ENCODE measurements at regions of chr7 and their contacts with region 1.

Region 1: DNA sequence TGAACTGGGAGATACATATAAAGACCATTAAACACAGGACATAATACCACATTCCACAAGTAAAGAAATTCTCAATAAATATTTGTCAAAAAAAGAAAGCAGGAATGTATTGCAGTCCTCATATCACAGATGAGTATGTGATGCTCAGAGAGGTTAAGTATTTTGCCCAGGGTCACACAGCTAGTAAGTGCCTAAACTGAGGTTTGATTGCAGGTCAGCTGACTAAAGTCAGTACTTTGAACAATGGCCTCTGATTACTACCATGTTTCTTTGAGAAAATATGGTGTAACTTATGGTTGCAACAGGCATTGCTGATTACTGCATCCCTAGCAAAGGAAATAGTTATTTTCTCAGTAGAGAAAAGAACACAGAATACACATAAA is 267.1 kb downstream of the ELMO1 start:
- DNase-seq: no peak
- ATAC-seq: peak; percentile 22
- H3K4me3 ChIP-seq: no peak overlapping the region
- H3K27ac ChIP-seq: no peak overlapping the region
- H3K4me1 ChIP-seq: no peaks in the 10 kb centered on the region
- H3K27me3 ChIP-seq: peaks cover 2% of the 10 kb centered on the region; the same call in 1 of the 2 replicates
- CTCF ChIP-seq: no peak
- POLR2A ChIP-seq: no peak
- RAD21 ChIP-seq: no peak

Region 2: GRCh38 chr7:36473454-36474282 is 707.9 kb before region 1 on chr7:
- CTCF ChIA-PET with region 1: no interaction called
- POLR2A ChIA-PET with region 1: no interaction called
- dilution Hi-C with region 1: no loop called
- in situ Hi-C with region 1: no loop called
- intact Hi-C with region 1: loop called (anchors 1 kb)
- DNase-seq: no peak
- ATAC-seq: peak; percentile 53
- H3K4me3 ChIP-seq: no peak overlapping the region
- H3K27ac ChIP-seq: no peak overlapping the region
- H3K4me1 ChIP-seq: no peaks in the 10 kb centered on the region
- H3K27me3 ChIP-seq: peaks cover 4% of the 10 kb centered on the region; the same call in 1 of the 2 replicates
- CTCF ChIP-seq: peak; percentile 42
- POLR2A ChIP-seq: no peak
- RAD21 ChIP-seq: peak; percentile 59

Region 3: DNA sequence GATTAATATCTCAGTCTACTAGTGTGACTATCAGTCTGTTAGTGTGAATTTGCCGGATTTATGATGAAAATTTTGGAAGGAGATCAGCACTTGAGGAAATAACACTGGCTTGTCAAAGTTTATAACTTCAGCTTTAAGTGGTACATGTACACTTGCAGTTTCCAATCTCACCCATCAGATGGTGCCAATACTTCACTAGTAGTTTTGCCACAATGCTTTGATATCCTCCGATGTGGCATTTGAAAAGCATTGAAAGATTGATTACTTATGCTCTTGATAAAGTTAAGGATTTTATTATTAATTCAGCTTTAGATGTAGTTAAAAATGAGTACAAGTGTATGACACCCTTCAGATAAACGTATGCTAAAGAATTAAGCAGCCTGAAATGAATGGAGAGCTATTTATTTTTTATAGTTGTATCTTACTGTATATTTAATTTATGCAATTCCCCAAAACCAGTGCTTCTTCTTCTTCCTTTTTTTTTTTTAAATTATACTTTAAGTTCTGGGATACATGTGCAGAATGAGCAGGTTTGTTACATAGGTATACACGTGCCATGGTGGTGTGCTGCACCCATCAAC is 693.7 kb before region 1 on chr7:
- CTCF ChIA-PET with region 1: interaction called, 3 read pairs
- POLR2A ChIA-PET with region 1: no interaction called
- dilution Hi-C with region 1: no loop called
- in situ Hi-C with region 1: no loop called
- intact Hi-C with region 1: loop called (anchors 1 kb)
- DNase-seq: peak; percentile 68
- ATAC-seq: peak; percentile 85
- H3K4me3 ChIP-seq: no peak overlapping the region
- H3K27ac ChIP-seq: no peak overlapping the region
- H3K4me1 ChIP-seq: no peaks in the 10 kb centered on the region
- H3K27me3 ChIP-seq: peaks cover 19% of the 10 kb centered on the region
- CTCF ChIP-seq: peak; percentile 88
- POLR2A ChIP-seq: no peak
- RAD21 ChIP-seq: peak; percentile 94

Region 4: GRCh38 chr7:36670585-36671431 is 510.7 kb before region 1 on chr7:
- CTCF ChIA-PET with region 1: interaction called, 3 read pairs
- POLR2A ChIA-PET with region 1: no interaction called
- dilution Hi-C with region 1: no loop called
- in situ Hi-C with region 1: loop called (anchors 25 kb)
- intact Hi-C with region 1: loop called (anchors 5 kb)
- DNase-seq: peak; percentile 62
- ATAC-seq: peak; percentile 98
- H3K4me3 ChIP-seq: no peak overlapping the region
- H3K27ac ChIP-seq: no peak overlapping the region
- H3K4me1 ChIP-seq: no peaks in the 10 kb centered on the region
- H3K27me3 ChIP-seq: peaks cover 10% of the 10 kb centered on the region
- CTCF ChIP-seq: peak; percentile 92
- POLR2A ChIP-seq: 0 out of 2 replicates have a peak, but pooled peaks have one; percentile 33
- RAD21 ChIP-seq: peak; percentile 93

Region 5: GRCh38 chr7:36986429-36987362 is 194.8 kb before region 1 on chr7:
- CTCF ChIA-PET with region 1: interaction called, 54 read pairs
- POLR2A ChIA-PET with region 1: no interaction called
- dilution Hi-C with region 1: no loop called
- in situ Hi-C with region 1: loop called (anchors 5 kb)
- intact Hi-C with region 1: loop called (anchors 1 kb)
- DNase-seq: peak; percentile 42
- ATAC-seq: peak; percentile 94
- H3K4me3 ChIP-seq: no peak overlapping the region
- H3K27ac ChIP-seq: no peak overlapping the region
- H3K4me1 ChIP-seq: no peaks in the 10 kb centered on the region
- H3K27me3 ChIP-seq: peaks cover 15% of the 10 kb centered on the region
- CTCF ChIP-seq: peak; percentile 88
- POLR2A ChIP-seq: no peak
- RAD21 ChIP-seq: peak; percentile 81

Region 6: DNA sequence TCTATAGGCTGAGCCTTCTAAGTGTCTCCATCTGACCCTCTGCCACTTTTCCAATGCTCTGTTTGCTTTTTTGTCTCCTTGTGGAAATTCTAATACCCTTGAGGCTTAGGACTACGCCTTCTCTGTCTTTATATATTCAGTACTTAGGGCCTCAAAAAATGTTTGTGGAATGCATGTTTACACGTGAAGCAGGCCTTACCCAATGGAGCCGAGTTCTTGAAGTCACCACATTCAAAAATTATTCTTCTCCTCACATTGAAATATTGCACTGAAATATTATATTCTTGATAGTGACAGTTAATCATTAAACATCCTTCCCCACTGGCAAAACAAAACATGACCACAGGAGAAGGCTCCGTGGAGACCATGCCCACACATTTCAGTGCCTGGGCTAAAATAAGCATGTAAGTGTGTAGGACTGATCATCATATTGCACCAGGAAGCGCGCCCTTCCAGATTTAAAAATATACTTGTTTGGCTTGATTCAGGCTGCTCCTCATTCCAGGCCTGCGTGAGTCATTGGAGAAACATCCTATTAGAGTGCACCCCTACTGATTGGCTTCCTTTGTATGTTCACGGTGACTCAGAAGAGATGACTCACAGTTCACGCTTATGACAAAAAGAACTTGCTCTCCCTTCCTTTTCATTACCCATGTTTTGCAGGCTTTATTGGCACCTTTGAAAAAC is 149.8 kb before region 1 on chr7:
- CTCF ChIA-PET with region 1: interaction called, 6 read pairs
- POLR2A ChIA-PET with region 1: no interaction called
- dilution Hi-C with region 1: no loop called
- in situ Hi-C with region 1: no loop called
- intact Hi-C with region 1: loop called (anchors 1 kb)
- DNase-seq: peak; percentile 100
- ATAC-seq: peak; percentile 95
- H3K4me3 ChIP-seq: no peak overlapping the region
- H3K27ac ChIP-seq: peak overlapping the region; percentile 60
- H3K4me1 ChIP-seq: peaks cover 13% of the 10 kb centered on the region
- H3K27me3 ChIP-seq: no peaks in the 10 kb centered on the region
- CTCF ChIP-seq: no peak
- POLR2A ChIP-seq: no peak
- RAD21 ChIP-seq: no peak

Region 7: GRCh38 chr7:37109843-37110242 is 71.7 kb before region 1 on chr7:
- CTCF ChIA-PET with region 1: no interaction called
- POLR2A ChIA-PET with region 1: no interaction called
- dilution Hi-C with region 1: no loop called
- in situ Hi-C with region 1: no loop called
- intact Hi-C with region 1: loop called (anchors 5 kb)
- DNase-seq: no peak
- ATAC-seq: peak; percentile 55
- H3K4me3 ChIP-seq: no peak overlapping the region
- H3K27ac ChIP-seq: peak overlapping the region; percentile 79; the same call in 1 of the 2 replicates
- H3K4me1 ChIP-seq: peaks cover 7% of the 10 kb centered on the region
- H3K27me3 ChIP-seq: no peaks in the 10 kb centered on the region
- CTCF ChIP-seq: no peak
- POLR2A ChIP-seq: no peak
- RAD21 ChIP-seq: no peak